ENCODE measurements at regions of chr6 and their contacts with region 1.

Region 1: DNA sequence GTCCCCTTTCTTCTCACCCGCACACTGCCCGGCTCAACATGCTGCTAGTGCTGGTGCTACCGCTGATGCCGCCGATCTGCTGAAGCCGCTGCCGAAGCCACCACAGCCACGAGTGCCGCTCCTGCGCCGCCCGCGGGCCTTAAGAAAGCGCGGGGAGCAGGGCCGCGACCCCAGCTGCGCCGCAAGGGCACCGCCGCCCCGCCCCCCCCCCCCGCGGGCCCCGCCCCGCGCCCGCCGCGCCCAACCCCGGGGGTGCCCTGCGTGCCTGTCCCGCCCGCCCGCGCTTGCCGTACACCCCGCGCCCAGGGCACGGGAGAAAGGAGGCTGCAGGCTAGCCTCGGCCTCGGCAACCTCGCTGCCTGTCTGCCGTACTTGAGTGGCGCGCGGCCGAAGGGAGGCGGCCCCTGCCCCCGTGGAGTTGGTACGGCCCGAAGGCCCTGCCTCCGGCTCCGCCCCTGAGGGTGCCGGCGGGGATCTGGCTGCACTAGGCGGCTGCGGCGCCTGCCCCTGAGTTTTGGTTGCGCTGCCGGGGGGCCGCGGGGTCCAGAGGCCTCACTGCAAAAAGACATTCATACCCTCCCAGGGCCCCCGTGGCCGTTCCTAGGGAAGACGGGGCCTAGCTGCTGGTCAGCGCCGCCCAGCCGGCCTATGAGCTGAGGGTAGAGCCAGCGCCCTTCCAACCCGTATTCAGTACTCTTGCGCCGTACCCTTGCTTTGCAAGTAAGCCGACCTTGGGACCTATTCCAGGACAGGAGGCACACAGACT is at the start of gene SOD2:
- DNase-seq: peak; percentile 89 to 92
- H3K4me3 ChIP-seq: peak within 1 kb of the TSS; percentile 81 to 88
- H3K27ac ChIP-seq: peak within 1 kb of the TSS; percentile 92 to 94
- H3K4me1 ChIP-seq: peaks cover 0 to 38% (median 18%) of the 10 kb centered on the region in 4 donors
- H3K27me3 ChIP-seq: no peaks in the 10 kb centered on the region
- CTCF ChIP-seq: no peak

Region 2: GRCh38 chr6:159726918-159727716 is 33.8 kb after region 1 on chr6 and contains the start of gene WTAP:
- intact Hi-C with region 1: loop called (anchors 2 kb)
- DNase-seq: peak; percentile 93 to 98
- H3K4me3 ChIP-seq: peak within 1 kb of the TSS; percentile 84 to 96
- H3K27ac ChIP-seq: peak within 1 kb of the TSS; percentile 99
- H3K4me1 ChIP-seq: peaks cover 0 to 42% (median 22%) of the 10 kb centered on the region in 4 donors
- H3K27me3 ChIP-seq: no peaks in the 10 kb centered on the region
- CTCF ChIP-seq: no peak

Region 3: GRCh38 chr6:159761873-159762680 is 68.8 kb after region 1 on chr6 and contains the start of gene ACAT2:
- intact Hi-C with region 1: loop called (anchors 2 kb)
- DNase-seq: peak; percentile 97 to 98
- H3K4me3 ChIP-seq: peak within 1 kb of the TSS; percentile 64 to 84
- H3K27ac ChIP-seq: peak within 1 kb of the TSS; percentile 92 to 95
- H3K4me1 ChIP-seq: peaks cover 0 to 26% (median 18%) of the 10 kb centered on the region in 4 donors
- H3K27me3 ChIP-seq: no peaks in the 10 kb centered on the region
- CTCF ChIP-seq: peak in 1 of 2 experiments; percentile 29

Region 4: GRCh38 chr6:159789377-159790148 is 96.3 kb after region 1 on chr6 and contains the start of gene TCP1:
- intact Hi-C with region 1: loop called (anchors 2 kb)
- DNase-seq: peak; percentile 100
- H3K4me3 ChIP-seq: peak within 1 kb of the TSS; percentile 80 to 92
- H3K27ac ChIP-seq: peak within 1 kb of the TSS; percentile 96 to 98
- H3K4me1 ChIP-seq: peaks cover 0 to 72% (median 47%) of the 10 kb centered on the region in 4 donors
- H3K27me3 ChIP-seq: no peaks in the 10 kb centered on the region
- CTCF ChIP-seq: no peak

Region 5: GRCh38 chr6:159852877-159853276 is 159.6 kb after region 1 on chr6:
- intact Hi-C with region 1: loop called (anchors 5 kb)
- DNase-seq: no peak
- H3K4me3 ChIP-seq: no peak overlapping the region
- H3K27ac ChIP-seq: peak overlapping the region; percentile 13 to 54
- H3K4me1 ChIP-seq: peaks cover 0 to 37% (median 14%) of the 10 kb centered on the region in 4 donors
- H3K27me3 ChIP-seq: no peaks in the 10 kb centered on the region
- CTCF ChIP-seq: peak in 1 of 2 experiments; percentile 4

Region 6: GRCh38 chr6:159941286-159942113 is 248.2 kb after region 1 on chr6:
- intact Hi-C with region 1: loop called (anchors 10 kb)
- DNase-seq: no peak
- H3K4me3 ChIP-seq: no peak overlapping the region
- H3K27ac ChIP-seq: peak overlapping the region in 1 of 2 donors; percentile 62
- H3K4me1 ChIP-seq: peaks cover 0 to 62% (median 24%) of the 10 kb centered on the region in 4 donors
- H3K27me3 ChIP-seq: no peaks in the 10 kb centered on the region
- CTCF ChIP-seq: peak; percentile 61 to 64